ENCODE measurements at regions of chr1 and their contacts with region 1.

Region 1: GRCh38 chr1:168342572-168343280 is 62.0 kb downstream of the TBX19 start:
- DNase-seq: peak; percentile 86
- H3K4me3 Mint-ChIP-seq: peak overlapping the region; percentile 37
- H3K27ac Mint-ChIP-seq: no peak overlapping the region
- H3K4me1 Mint-ChIP-seq: peaks cover 18% of the 10 kb centered on the region
- H3K27me3 Mint-ChIP-seq: no peaks in the 10 kb centered on the region
- CTCF ChIP-seq: peak; percentile 88

Region 2: GRCh38 chr1:168092566-168093355 is 250.0 kb before region 1 on chr1:
- CTCF ChIA-PET with region 1: interaction called, 12 read pairs
- POLR2A ChIA-PET with region 1: no interaction called
- intact Hi-C with region 1: loop called (anchors 5 kb)
- DNase-seq: peak; percentile 57
- H3K4me3 Mint-ChIP-seq: no peak overlapping the region
- H3K27ac Mint-ChIP-seq: no peak overlapping the region
- H3K4me1 Mint-ChIP-seq: peaks cover 4% of the 10 kb centered on the region
- H3K27me3 Mint-ChIP-seq: no peaks in the 10 kb centered on the region
- CTCF ChIP-seq: peak; percentile 61

Region 3: GRCh38 chr1:168373869-168374268 is 31.1 kb after region 1 on chr1:
- CTCF ChIA-PET with region 1: interaction called, 51 read pairs
- POLR2A ChIA-PET with region 1: no interaction called
- intact Hi-C with region 1: no loop called
- DNase-seq: peak; percentile 36
- H3K4me3 Mint-ChIP-seq: no peak overlapping the region
- H3K27ac Mint-ChIP-seq: no peak overlapping the region
- H3K4me1 Mint-ChIP-seq: peaks cover 1% of the 10 kb centered on the region
- H3K27me3 Mint-ChIP-seq: no peaks in the 10 kb centered on the region
- CTCF ChIP-seq: no peak

Region 4: GRCh38 chr1:168428063-168428731 is 85.5 kb after region 1 on chr1:
- CTCF ChIA-PET with region 1: interaction called, 68 read pairs
- POLR2A ChIA-PET with region 1: no interaction called
- intact Hi-C with region 1: no loop called
- DNase-seq: no peak
- H3K4me3 Mint-ChIP-seq: no peak overlapping the region
- H3K27ac Mint-ChIP-seq: no peak overlapping the region
- H3K4me1 Mint-ChIP-seq: no peaks in the 10 kb centered on the region
- H3K27me3 Mint-ChIP-seq: peaks cover 2% of the 10 kb centered on the region
- CTCF ChIP-seq: no peak

Region 5: GRCh38 chr1:168553680-168554553 is 211.2 kb after region 1 on chr1:
- CTCF ChIA-PET with region 1: interaction called, 14 read pairs
- POLR2A ChIA-PET with region 1: interaction called, 3 read pairs
- intact Hi-C with region 1: no loop called
- DNase-seq: no peak
- H3K4me3 Mint-ChIP-seq: no peak overlapping the region
- H3K27ac Mint-ChIP-seq: no peak overlapping the region
- H3K4me1 Mint-ChIP-seq: peaks cover 22% of the 10 kb centered on the region
- H3K27me3 Mint-ChIP-seq: no peaks in the 10 kb centered on the region
- CTCF ChIP-seq: no peak

Region 6: DNA sequence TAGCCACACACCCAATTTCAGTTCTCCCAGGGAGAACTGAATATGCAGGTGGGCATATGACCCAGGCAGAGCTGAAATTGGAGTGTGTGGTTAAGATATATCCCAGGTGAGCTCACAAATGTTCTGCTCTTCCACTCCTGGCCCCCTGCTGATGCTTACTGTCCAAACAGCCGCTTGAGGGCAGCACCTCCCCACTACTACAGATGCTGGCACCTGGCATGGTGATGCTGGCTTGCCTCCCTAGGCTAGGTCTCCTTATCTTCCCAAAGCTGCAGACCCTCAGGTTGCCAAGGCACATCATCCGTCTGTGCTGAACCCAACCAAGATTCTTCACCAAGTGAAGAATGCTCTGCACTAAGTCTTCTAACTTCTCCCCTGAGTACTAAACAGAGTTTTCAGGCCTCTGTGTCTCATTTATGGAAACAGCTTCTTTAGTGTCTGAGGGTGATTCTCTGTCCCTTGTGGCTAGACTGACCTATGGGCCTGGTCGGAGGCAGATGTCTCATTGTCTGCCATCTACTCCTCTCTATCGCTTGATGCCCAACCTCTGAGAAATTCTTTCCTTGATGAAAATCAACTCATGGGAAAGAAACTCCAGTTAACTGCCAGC is 260.9 kb after region 1 on chr1:
- CTCF ChIA-PET with region 1: interaction called, 70 read pairs
- POLR2A ChIA-PET with region 1: interaction called, 5 read pairs
- intact Hi-C with region 1: no loop called
- DNase-seq: peak; percentile 88
- H3K4me3 Mint-ChIP-seq: no peak overlapping the region
- H3K27ac Mint-ChIP-seq: no peak overlapping the region
- H3K4me1 Mint-ChIP-seq: peaks cover 7% of the 10 kb centered on the region
- H3K27me3 Mint-ChIP-seq: no peaks in the 10 kb centered on the region
- CTCF ChIP-seq: peak; percentile 99

Region 7: DNA sequence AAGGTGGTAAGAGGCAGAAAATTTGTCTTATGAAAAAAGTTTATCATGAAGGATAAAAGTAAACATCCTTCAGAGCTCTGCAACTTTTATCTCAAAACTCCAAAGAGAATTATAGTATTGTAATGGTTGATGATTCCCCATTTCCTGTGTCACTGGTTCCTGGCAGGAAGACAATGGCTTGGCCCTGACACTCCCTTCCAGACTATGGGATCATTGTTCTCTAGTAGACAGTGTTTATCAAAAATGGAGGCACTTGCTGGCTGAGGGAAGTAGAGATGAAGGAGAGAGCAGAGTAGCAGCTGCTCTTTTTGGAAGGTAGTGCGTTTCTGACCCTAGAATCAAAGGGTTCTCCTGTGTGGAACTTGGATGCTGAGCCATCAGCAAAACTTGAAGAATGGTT is 617.9 kb after region 1 on chr1:
- CTCF ChIA-PET with region 1: no interaction called
- POLR2A ChIA-PET with region 1: no interaction called
- intact Hi-C with region 1: no loop called
- DNase-seq: no peak
- H3K4me3 Mint-ChIP-seq: no peak overlapping the region
- H3K27ac Mint-ChIP-seq: no peak overlapping the region
- H3K4me1 Mint-ChIP-seq: peaks cover 5% of the 10 kb centered on the region
- H3K27me3 Mint-ChIP-seq: peaks cover 11% of the 10 kb centered on the region
- CTCF ChIP-seq: no peak

Region 8: GRCh38 chr1:169546087-169546995 is 1203.6 kb after region 1 on chr1:
- CTCF ChIA-PET with region 1: interaction called, 3 read pairs
- POLR2A ChIA-PET with region 1: no interaction called
- intact Hi-C with region 1: loop called (anchors 1 kb)
- DNase-seq: peak; percentile 88
- H3K4me3 Mint-ChIP-seq: no peak overlapping the region
- H3K27ac Mint-ChIP-seq: no peak overlapping the region
- H3K4me1 Mint-ChIP-seq: no peaks in the 10 kb centered on the region
- H3K27me3 Mint-ChIP-seq: peaks cover 8% of the 10 kb centered on the region
- CTCF ChIP-seq: peak; percentile 86